Activated CD4-positive, alpha-beta T cell treated with anti-CD3 and anti-CD28 coated beads for 36 hours (primary cell): ENCODE measurements at regions of chr9 and their contacts with region 1.

Region 1: GRCh38 chr9:95875305-95876137 is at the start of gene ERCC6L2:
- DNase-seq: peak; percentile 97
- ATAC-seq: peak; percentile 94
- H3K4me3 Mint-ChIP-seq: no peak within 1 kb of the TSS
- H3K27ac Mint-ChIP-seq: no peak within 1 kb of the TSS
- H3K4me1 Mint-ChIP-seq: peaks cover 20% of the 10 kb centered on the region
- H3K27me3 Mint-ChIP-seq: no peaks in the 10 kb centered on the region
- total RNA-seq, gene ERCC6L2: 24.0 to 25.9 TPM

Region 2: DNA sequence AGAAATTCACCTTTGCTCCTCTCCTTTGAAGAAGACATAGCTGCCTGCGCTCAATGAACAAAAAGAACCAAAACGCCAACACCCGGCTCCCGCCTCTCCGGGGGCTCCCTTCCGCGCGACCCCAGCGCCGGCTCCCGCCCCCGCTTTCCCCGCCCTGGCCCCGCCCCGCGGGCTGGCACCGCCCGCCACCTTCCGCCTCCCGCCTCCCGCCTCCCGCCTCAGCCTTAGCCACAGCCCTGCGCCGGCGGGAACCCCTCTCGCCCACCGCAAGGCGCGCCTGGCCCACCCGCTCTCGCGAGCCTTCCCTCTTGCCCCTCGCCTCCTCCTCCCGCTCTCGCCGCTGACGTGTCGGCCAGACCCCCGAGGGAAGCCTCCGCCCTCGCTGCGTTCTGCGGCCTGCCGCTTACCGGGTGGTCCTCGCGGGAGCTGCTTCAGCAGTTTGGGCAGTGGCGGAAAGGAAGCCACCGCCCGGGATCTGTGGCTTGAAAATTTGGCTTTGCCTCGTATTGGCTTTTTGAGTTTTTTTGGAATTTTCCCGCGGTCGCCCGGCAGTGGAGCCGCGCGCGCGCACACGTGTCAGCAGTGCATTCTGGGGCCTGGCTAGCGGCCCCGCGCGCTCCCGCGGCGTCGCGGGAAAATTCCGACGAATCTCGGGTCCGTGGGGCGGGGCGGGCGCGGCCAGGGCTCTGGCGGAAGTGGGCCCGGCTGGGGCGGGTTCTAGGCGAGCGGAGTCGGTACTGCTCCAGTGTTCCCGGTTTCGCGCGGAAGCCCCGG is 558.2 kb before region 1 on chr9 and contains the start of gene FANCC:
- CTCF ChIA-PET with region 1: no interaction called
- POLR2A ChIA-PET with region 1: no interaction called
- intact Hi-C with region 1: loop called in 1 of 2 experiments (anchors 2 kb)
- DNase-seq: peak; percentile 90
- ATAC-seq: peak; percentile 84
- H3K4me3 Mint-ChIP-seq: peak within 1 kb of the TSS; percentile 85
- H3K27ac Mint-ChIP-seq: peak within 1 kb of the TSS; percentile 95
- H3K4me1 Mint-ChIP-seq: peaks cover 15% of the 10 kb centered on the region
- H3K27me3 Mint-ChIP-seq: peaks cover 7% of the 10 kb centered on the region
- total RNA-seq, gene FANCC: 15.9 to 16.7 TPM

Region 3: GRCh38 chr9:95510709-95511615 is 364.6 kb before region 1 on chr9:
- CTCF ChIA-PET with region 1: no interaction called
- POLR2A ChIA-PET with region 1: no interaction called
- intact Hi-C with region 1: loop called (anchors 1 to 5 kb)
- DNase-seq: peak; percentile 92
- ATAC-seq: peak; percentile 74
- H3K4me3 Mint-ChIP-seq: peak overlapping the region; percentile 82
- H3K27ac Mint-ChIP-seq: peak overlapping the region; percentile 84
- H3K4me1 Mint-ChIP-seq: peaks cover 38% of the 10 kb centered on the region
- H3K27me3 Mint-ChIP-seq: peaks cover 26% of the 10 kb centered on the region

Region 4: DNA sequence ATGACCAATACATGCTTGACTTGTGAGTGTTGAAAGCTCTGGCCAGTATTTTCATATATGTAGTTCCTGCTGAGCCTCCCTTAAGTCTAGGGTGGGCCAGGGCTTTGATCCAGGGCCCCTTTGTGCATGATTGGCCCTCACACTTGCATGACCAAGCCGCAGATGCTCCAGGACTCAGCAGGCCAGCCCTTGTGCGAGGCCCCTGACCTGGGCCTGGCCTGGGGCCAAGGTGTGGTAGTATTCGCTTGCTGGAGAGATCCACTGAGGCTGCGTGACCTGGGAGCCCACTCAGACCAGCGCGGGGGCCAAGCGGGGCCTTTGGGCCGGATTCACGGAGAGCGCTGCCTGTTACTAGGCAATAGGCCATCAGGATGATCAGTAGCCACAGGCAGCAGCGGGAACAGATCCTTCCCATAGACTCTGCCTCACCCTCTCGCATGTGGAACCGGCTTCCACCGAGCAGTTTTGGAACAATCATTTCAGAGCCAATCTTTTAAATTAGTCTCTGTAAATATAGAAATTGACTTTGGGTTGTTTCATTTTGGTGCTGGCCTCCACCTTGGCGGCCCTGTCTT is 279.7 kb before region 1 on chr9:
- CTCF ChIA-PET with region 1: no interaction called
- POLR2A ChIA-PET with region 1: no interaction called
- intact Hi-C with region 1: no loop called
- DNase-seq: no peak
- ATAC-seq: no peak
- H3K4me3 Mint-ChIP-seq: no peak overlapping the region
- H3K27ac Mint-ChIP-seq: no peak overlapping the region
- H3K4me1 Mint-ChIP-seq: no peaks in the 10 kb centered on the region
- H3K27me3 Mint-ChIP-seq: no peaks in the 10 kb centered on the region

Region 5: DNA sequence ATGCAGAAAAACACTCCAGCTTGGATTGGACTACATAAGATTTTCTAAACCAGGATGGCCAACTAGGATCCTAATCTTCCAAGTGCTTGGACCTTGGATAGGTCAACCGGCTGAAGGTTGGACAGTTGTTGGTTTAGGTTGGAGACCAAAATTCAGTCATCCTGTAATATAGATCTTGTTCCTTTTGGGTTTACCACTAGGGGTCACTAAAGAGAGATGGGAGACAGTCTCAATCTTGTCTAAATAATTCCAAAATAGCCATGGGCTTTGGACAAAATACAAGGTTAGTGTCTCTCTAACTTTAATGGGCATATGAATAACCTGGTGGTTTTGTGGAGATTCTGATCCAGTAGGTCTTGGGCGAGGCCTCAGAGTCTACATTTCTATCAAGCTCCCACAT is 148.8 kb before region 1 on chr9:
- CTCF ChIA-PET with region 1: no interaction called
- POLR2A ChIA-PET with region 1: no interaction called
- intact Hi-C with region 1: loop called (anchors 1 kb)
- DNase-seq: no peak
- ATAC-seq: no peak
- H3K4me3 Mint-ChIP-seq: no peak overlapping the region
- H3K27ac Mint-ChIP-seq: no peak overlapping the region
- H3K4me1 Mint-ChIP-seq: peaks cover 37% of the 10 kb centered on the region
- H3K27me3 Mint-ChIP-seq: peaks cover 7% of the 10 kb centered on the region

Region 6: GRCh38 chr9:95852059-95853032 is 23.2 kb before region 1 on chr9:
- CTCF ChIA-PET with region 1: interaction called, 4 read pairs
- POLR2A ChIA-PET with region 1: interaction called, 3 read pairs
- intact Hi-C with region 1: loop called in 1 of 2 experiments (anchors 1 kb)
- DNase-seq: peak; percentile 22
- ATAC-seq: peak; percentile 96
- H3K4me3 Mint-ChIP-seq: no peak overlapping the region
- H3K27ac Mint-ChIP-seq: peak overlapping the region; percentile 58
- H3K4me1 Mint-ChIP-seq: peaks cover 19% of the 10 kb centered on the region
- H3K27me3 Mint-ChIP-seq: no peaks in the 10 kb centered on the region

Region 7: GRCh38 chr9:96217754-96218693 is 342.5 kb after region 1 on chr9:
- CTCF ChIA-PET with region 1: no interaction called
- POLR2A ChIA-PET with region 1: no interaction called
- intact Hi-C with region 1: loop called in 1 of 2 experiments (anchors 5 kb)
- DNase-seq: peak; percentile 86
- ATAC-seq: peak; percentile 90
- H3K4me3 Mint-ChIP-seq: peak overlapping the region; percentile 57
- H3K27ac Mint-ChIP-seq: peak overlapping the region; percentile 42
- H3K4me1 Mint-ChIP-seq: peaks cover 9% of the 10 kb centered on the region
- H3K27me3 Mint-ChIP-seq: peaks cover 50% of the 10 kb centered on the region

Region 8: DNA sequence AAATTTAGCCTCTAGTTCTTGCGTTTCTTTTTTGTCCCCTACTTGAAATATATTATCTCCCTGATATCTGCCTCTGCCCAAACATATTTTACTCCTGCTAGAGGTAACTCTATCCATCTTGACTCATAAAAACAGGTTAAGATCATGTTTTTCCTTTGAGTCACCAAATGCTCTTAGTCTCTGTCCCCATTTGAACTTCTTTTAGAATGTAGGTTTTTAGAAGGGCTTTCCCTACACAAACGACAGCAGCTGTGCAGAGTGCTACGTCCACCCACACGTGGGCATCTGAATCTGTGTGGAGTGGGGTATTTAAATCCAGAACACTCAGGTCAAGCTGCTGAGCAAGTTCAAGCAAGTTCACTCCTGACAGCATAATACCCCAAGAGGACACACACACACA is 424.3 kb after region 1 on chr9:
- CTCF ChIA-PET with region 1: no interaction called
- POLR2A ChIA-PET with region 1: no interaction called
- intact Hi-C with region 1: no loop called
- DNase-seq: no peak
- ATAC-seq: no peak
- H3K4me3 Mint-ChIP-seq: no peak overlapping the region
- H3K27ac Mint-ChIP-seq: no peak overlapping the region
- H3K4me1 Mint-ChIP-seq: no peaks in the 10 kb centered on the region
- H3K27me3 Mint-ChIP-seq: no peaks in the 10 kb centered on the region

Region 9: DNA sequence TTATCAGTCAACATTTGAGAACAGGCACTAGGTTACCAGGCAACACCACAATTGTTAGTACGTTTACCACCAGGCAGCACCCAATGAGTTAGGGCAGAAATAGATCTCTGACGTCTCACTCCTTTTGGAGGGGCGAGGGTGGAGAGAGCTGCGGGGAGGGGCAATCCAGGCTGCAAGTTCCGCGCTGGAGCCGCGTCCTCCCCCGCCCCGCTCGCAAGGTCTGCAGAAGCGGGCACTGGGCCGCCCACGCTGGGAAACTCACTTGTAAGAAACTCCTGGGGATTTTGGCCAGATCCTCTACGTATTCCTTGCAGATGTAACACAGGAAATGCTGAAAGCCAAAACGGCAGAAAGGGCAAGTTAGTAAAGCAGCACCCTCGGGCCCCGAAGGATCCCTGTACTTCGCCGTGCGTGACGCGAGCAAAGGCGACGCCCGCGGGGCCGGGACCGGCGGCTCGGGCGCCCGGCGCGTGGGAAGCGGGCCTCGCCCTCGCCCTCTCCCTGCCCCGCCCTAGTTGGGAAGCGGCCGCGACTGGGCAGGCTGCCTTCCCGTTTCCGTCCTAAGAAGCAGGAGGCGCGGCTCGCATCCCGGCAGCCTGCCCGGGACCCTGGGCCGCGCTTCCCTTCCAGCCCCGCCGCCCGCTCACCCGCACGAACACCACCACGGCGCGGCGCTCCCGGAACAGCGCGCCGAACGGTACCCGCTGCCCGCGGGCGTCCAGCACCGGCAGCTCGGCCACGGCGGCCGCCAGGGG is 779.1 kb after region 1 on chr9:
- CTCF ChIA-PET with region 1: no interaction called
- POLR2A ChIA-PET with region 1: no interaction called
- intact Hi-C with region 1: loop called in 1 of 2 experiments (anchors 1 kb)
- DNase-seq: peak; percentile 78
- ATAC-seq: peak; percentile 69
- H3K4me3 Mint-ChIP-seq: peak overlapping the region; percentile 78
- H3K27ac Mint-ChIP-seq: peak overlapping the region; percentile 78
- H3K4me1 Mint-ChIP-seq: peaks cover 15% of the 10 kb centered on the region
- H3K27me3 Mint-ChIP-seq: no peaks in the 10 kb centered on the region